CD4-positive, alpha-beta T cell (primary cell): ENCODE measurements at regions of chr4 and their contacts with region 1.

Region 1: DNA sequence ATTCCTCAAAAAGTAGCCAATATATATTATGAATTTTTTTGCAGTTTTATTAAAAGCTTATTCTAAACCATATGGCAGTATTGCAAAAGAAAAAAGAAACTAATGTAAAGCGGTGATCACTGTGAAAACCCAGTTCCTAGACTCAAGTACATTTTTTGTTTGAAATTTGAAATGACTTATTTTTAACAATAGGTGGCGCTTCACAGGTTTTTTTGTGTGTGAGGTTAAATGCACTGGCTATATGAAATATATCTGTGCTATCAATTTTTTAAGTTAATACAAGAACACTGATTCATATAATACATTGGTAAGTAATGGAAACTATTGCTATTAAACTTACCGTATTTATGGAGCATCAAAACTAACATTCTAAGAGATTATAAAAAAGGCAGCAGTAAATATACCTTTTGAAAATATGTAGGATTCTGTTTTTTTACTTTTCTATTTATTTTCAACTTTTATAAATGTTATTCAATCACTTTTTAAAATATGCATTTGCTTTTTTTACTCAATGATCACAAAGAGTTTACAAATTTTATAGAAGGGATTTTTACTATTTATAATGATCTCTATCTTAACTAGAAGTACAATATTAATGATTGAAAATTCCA is 5.6 kb upstream of the SPRY1 start:
- DNase-seq: peak in 3 of 14 experiments; percentile 36 to 49 (median 40)
- ATAC-seq: no peak
- H3K4me3 ChIP-seq: no peak overlapping the region
- H3K4me3 Mint-ChIP-seq: no peak overlapping the region
- H3K27ac ChIP-seq: no peak overlapping the region
- H3K27ac Mint-ChIP-seq: no peak overlapping the region
- H3K4me1 ChIP-seq: no peaks in the 10 kb centered on the region
- H3K4me1 Mint-ChIP-seq: no peaks in the 10 kb centered on the region
- H3K27me3 ChIP-seq: no peaks in the 10 kb centered on the region
- H3K27me3 Mint-ChIP-seq: no peaks in the 10 kb centered on the region
- CTCF ChIP-seq: peak; percentile 73

Region 2: DNA sequence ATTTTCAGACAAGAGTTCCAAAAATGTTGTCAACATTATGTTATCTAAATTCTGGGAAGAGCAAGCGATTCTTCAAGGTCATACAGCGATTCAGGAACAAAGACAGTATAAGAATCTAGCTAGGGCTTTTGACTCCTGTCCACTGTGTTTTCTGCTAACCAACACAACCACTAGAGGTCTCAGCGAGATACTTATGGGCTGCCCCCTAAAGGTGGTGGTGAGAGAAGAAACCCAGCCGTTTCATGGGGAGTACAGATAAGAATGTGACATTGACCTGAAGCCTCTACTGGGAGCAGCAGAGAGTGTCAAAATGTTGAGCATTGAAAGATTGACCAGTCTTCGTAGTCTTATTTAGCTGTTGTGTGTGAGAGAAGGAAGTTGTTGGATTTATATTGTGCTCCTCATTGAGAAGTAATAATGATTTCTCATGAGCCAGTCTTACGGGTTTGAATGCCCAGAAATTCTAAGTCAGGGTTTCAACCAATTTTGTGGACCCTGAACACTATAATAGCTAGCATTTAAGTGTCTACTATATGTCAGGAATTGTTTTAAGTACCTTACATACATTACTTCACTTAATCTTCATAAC is 173.9 kb after region 1 on chr4:
- CTCF ChIA-PET with region 1: no interaction called
- POLR2A ChIA-PET with region 1: no interaction called
- intact Hi-C with region 1: loop called in 1 of 2 experiments (anchors 5 kb)
- DNase-seq: peak in 12 of 14 experiments; percentile 8 to 79 (median 22)
- ATAC-seq: peak; percentile 86
- H3K4me3 ChIP-seq: no peak overlapping the region
- H3K4me3 Mint-ChIP-seq: no peak overlapping the region
- H3K27ac ChIP-seq: no peak overlapping the region
- H3K27ac Mint-ChIP-seq: no peak overlapping the region
- H3K4me1 ChIP-seq: no peaks in the 10 kb centered on the region
- H3K4me1 Mint-ChIP-seq: no peaks in the 10 kb centered on the region
- H3K27me3 ChIP-seq: no peaks in the 10 kb centered on the region
- H3K27me3 Mint-ChIP-seq: peaks cover 4% of the 10 kb centered on the region
- CTCF ChIP-seq: peak; percentile 88

Region 3: DNA sequence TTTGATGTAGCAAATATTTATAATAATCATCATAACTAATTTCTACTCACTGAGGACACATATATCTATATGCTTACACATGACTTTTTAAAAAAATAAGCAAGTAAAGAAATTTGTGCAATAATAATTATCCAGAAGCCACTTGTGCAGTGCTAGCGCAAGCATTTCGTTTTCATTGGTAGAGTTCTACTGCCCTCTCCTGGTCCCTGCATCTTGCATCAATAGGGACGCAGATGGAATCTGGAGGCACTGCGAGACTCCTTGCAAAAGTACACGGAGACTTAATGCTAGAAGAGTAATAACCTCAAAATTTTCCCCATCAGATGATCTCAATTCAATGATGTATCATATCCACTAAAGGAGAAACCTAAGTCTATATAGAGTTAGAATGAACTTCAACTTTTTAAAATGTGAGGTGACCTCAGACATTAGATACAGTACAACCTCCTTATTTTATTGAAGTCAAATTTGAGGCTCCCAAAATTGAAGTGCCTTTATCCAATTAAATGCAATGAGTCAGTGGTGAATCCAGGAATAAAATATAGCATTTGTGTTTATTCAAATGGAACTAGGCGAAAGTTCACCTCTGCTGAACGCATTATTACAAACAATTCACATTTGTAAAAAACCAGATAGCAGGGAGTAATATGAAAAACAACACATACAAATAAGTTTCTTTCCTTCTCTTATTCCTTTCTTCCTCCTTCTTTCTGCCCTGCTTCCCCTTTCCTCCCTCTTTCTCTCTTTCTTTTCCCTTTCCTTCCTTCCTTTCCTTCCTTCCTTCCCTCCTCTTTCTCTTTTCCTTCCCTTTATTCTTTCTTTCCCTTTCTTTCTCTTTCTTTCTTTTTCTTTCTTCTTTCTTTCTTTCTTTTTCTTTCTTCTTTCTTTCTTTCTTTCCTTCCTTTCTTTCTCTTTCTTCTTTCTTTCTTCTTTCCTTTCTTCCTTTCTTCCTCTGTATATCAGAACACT is 871.5 kb after region 1 on chr4:
- CTCF ChIA-PET with region 1: no interaction called
- POLR2A ChIA-PET with region 1: no interaction called
- intact Hi-C with region 1: loop called in 1 of 2 experiments (anchors 5 kb)
- DNase-seq: peak in 6 of 14 experiments; percentile 5 to 56 (median 32)
- ATAC-seq: no peak
- H3K4me3 ChIP-seq: no peak overlapping the region
- H3K4me3 Mint-ChIP-seq: no peak overlapping the region
- H3K27ac ChIP-seq: no peak overlapping the region
- H3K27ac Mint-ChIP-seq: no peak overlapping the region
- H3K4me1 ChIP-seq: no peaks in the 10 kb centered on the region
- H3K4me1 Mint-ChIP-seq: no peaks in the 10 kb centered on the region
- H3K27me3 ChIP-seq: no peaks in the 10 kb centered on the region
- H3K27me3 Mint-ChIP-seq: no peaks in the 10 kb centered on the region
- CTCF ChIP-seq: peak; percentile 2

Region 4: GRCh38 chr4:124322234-124323065 is 931.5 kb after region 1 on chr4:
- CTCF ChIA-PET with region 1: no interaction called
- POLR2A ChIA-PET with region 1: no interaction called
- intact Hi-C with region 1: loop called in 1 of 2 experiments (anchors 2 kb)
- DNase-seq: peak in 3 of 14 experiments; percentile 18 to 21 (median 20)
- ATAC-seq: no peak
- H3K4me3 ChIP-seq: no peak overlapping the region
- H3K4me3 Mint-ChIP-seq: no peak overlapping the region
- H3K27ac ChIP-seq: no peak overlapping the region
- H3K27ac Mint-ChIP-seq: no peak overlapping the region
- H3K4me1 ChIP-seq: no peaks in the 10 kb centered on the region
- H3K4me1 Mint-ChIP-seq: no peaks in the 10 kb centered on the region
- H3K27me3 ChIP-seq: no peaks in the 10 kb centered on the region
- H3K27me3 Mint-ChIP-seq: no peaks in the 10 kb centered on the region
- CTCF ChIP-seq: peak; percentile 67